HEK293 (cell line): ENCODE measurements at regions of chr17 and their contacts with region 1.

Region 1: GRCh38 chr17:36148559-36149295 is 27.7 kb downstream of the TBC1D3B start:
- H3K4me3 ChIP-seq: no peak overlapping the region
- H3K27ac ChIP-seq: no peak overlapping the region
- H3K4me1 ChIP-seq: no peaks in the 10 kb centered on the region
- CTCF ChIP-seq: peak; percentile 99

Region 2: GRCh38 chr17:35947156-35947585 is 201.6 kb before region 1 on chr17:
- CTCF ChIA-PET with region 1: interaction called, 25 read pairs
- POLR2A ChIA-PET with region 1: no interaction called
- H3K4me3 ChIP-seq: no peak overlapping the region
- H3K27ac ChIP-seq: no peak overlapping the region
- H3K4me1 ChIP-seq: peaks cover 6% of the 10 kb centered on the region; the same call in 1 of the 2 replicates
- CTCF ChIP-seq: peak; percentile 67; the same call in 1 of the 2 replicates

Region 3: GRCh38 chr17:35981908-35982330 is 166.8 kb before region 1 on chr17:
- CTCF ChIA-PET with region 1: interaction called, 165 read pairs
- POLR2A ChIA-PET with region 1: no interaction called
- H3K4me3 ChIP-seq: no peak overlapping the region
- H3K27ac ChIP-seq: no peak overlapping the region
- H3K4me1 ChIP-seq: no peaks in the 10 kb centered on the region
- CTCF ChIP-seq: no peak

Region 4: DNA sequence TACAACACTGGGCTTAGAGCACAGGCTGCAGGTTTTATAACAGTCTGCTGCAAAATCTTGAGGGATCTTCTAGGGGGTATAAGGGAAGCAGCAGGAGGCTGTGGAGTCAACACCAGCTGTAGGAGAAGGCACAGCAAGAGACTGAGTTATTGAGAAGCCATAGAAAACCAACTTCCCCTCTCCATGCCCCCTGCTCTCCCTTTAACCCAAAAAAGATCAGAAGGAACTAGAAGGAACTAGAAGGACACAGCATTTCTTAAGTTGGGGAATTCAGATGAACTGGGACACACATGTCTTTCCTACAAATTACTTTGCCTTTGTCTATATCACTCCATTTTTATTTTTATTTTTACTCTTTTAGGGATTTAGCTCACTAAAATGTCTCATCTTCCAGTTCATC is 90.8 kb before region 1 on chr17:
- CTCF ChIA-PET with region 1: interaction called, 10 read pairs
- POLR2A ChIA-PET with region 1: no interaction called
- H3K4me3 ChIP-seq: no peak overlapping the region
- H3K27ac ChIP-seq: no peak overlapping the region
- H3K4me1 ChIP-seq: no peaks in the 10 kb centered on the region
- CTCF ChIP-seq: no peak

Region 5: GRCh38 chr17:36111068-36111490 is 37.6 kb before region 1 on chr17:
- CTCF ChIA-PET with region 1: interaction called, 41 read pairs
- POLR2A ChIA-PET with region 1: no interaction called
- H3K4me3 ChIP-seq: no peak overlapping the region
- H3K27ac ChIP-seq: no peak overlapping the region
- H3K4me1 ChIP-seq: no peaks in the 10 kb centered on the region
- CTCF ChIP-seq: no peak

Region 6: DNA sequence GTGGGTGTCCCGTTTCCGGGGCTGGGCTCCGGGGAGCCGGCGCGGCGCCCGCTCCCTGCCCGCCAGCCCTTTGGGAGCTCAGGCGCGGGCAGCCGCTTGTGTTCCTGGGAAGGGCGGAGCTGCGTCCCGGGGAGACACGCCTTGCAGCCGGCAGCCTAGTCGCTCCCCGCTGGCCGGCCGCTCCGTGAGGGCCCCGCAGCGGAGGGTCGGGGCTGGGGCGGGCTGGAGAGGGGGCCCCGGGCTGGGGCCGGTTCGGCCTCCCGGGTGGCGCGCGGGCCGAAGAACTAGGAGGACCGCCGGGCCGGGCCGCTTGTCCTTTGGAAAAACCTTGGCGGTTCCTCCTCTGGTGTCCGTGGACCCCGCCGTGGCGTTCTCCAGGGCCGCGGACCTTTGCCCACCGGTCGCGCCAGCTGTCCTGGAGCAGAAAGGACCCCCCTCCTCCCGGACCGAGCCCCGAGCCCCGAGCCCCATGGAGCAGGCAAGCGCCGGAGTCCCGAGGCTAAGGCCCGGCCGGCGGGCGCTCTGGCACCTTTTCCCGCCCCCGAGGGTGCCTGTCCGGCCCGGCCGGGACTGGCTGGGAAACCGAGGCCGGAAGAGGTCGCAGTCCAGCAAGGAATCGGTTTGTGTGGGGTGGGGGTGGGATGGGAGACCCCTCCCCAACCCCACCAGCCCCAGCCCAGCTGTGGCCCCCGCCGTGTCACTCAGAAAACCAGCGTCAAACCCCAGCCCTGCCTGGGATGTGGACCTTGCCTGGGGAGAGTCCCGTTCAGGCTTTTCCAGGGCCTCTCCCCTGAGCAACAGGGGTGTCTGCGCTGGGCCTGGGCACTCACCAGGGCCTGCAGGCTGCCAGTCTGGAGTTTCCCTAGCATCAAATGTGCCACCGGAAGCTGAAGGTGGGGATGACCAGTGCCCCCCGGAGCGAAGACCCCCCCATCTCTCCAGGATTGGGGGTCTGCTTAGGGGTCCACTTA is 34.6 kb after region 1 on chr17:
- CTCF ChIA-PET with region 1: interaction called, 19 read pairs
- POLR2A ChIA-PET with region 1: no interaction called
- H3K4me3 ChIP-seq: peak overlapping the region; percentile 31
- H3K27ac ChIP-seq: 0 out of 2 replicates have a peak overlapping the region, but pooled peaks have one; percentile 9
- H3K4me1 ChIP-seq: no peaks in the 10 kb centered on the region
- CTCF ChIP-seq: no peak

Region 7: DNA sequence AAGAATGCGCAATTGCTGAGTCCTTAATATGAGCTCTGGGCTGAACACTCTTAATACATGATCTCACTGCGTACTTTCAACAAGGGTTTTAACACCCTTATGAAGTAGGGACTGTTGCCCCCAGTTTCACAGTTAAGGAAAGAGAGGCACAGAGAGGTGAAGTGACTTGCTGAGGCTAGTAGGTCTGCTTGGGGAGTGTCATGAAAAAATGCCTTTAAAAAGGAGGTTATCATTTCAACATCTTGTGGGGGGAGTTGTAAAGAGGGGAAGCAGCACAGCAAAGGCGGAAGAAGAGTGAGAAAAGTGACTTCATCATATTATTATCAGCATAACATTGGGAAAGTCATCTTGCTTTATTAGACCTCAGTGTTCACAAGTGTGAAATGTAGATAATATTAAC is 64.2 kb after region 1 on chr17:
- CTCF ChIA-PET with region 1: no interaction called
- POLR2A ChIA-PET with region 1: no interaction called
- H3K4me3 ChIP-seq: no peak overlapping the region
- H3K27ac ChIP-seq: no peak overlapping the region
- H3K4me1 ChIP-seq: no peaks in the 10 kb centered on the region
- CTCF ChIP-seq: no peak